ENCODE measurements at regions of chr19 and their contacts with region 1.

Region 1: GRCh38 chr19:46299004-46299509 is 2.2 kb downstream of the HIF3A start:
- DNase-seq: peak; percentile 96
- ATAC-seq: peak; percentile 73 to 75

Region 2: GRCh38 chr19:46346821-46347571 is 47.9 kb after region 1 on chr19 and contains the start of gene PPP5C:
- intact Hi-C with region 1: loop called in 1 of 2 experiments (anchors 1 kb)
- DNase-seq: peak; percentile 95
- ATAC-seq: peak; percentile 86 to 88
- total RNA-seq, gene PPP5C: 60.5 to 75.1 TPM

Region 3: GRCh38 chr19:46546194-46546896 is 247.3 kb after region 1 on chr19:
- intact Hi-C with region 1: no loop called
- DNase-seq: no peak
- ATAC-seq: peak; percentile 58 to 70